MCF 10A (cell line): ENCODE measurements at regions of chr21 and their contacts with region 1.

Region 1: DNA sequence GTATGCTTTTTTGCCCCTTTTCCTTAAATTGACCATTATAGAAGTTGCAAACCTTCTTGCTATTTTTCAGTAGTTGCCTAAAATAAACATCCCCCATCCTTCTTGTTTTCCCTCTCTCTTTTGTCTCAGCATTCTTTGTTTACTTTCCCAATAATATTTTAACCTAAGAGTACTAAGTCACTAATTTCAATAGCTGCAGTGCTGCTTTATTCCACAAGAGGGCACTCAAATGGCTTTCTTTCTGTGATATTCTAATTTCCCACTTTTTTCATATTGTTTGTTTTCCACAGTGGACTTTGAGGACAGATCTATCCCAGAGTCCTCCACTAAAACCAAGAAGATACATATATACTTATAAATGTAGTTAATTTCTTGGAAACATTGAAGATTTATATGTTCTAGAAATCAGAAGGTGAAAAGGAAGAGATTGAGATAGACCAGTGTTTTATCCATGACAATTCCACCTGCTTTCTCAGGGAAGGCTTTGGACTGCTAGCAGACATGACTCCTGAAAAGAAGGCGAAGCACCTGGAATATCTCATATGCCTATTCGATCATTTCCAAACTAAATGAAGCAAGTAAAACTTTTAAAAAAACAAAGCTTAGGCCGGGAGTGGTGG is 104.8 kb upstream of the GRIK1 start:
- DNase-seq: peak; percentile 53
- H3K4me3 Mint-ChIP-seq: no peak overlapping the region
- H3K27ac Mint-ChIP-seq: no peak overlapping the region
- H3K4me1 Mint-ChIP-seq: no peaks in the 10 kb centered on the region
- H3K27me3 Mint-ChIP-seq: peaks cover 6% of the 10 kb centered on the region
- CTCF ChIP-seq: peak; percentile 63

Region 2: DNA sequence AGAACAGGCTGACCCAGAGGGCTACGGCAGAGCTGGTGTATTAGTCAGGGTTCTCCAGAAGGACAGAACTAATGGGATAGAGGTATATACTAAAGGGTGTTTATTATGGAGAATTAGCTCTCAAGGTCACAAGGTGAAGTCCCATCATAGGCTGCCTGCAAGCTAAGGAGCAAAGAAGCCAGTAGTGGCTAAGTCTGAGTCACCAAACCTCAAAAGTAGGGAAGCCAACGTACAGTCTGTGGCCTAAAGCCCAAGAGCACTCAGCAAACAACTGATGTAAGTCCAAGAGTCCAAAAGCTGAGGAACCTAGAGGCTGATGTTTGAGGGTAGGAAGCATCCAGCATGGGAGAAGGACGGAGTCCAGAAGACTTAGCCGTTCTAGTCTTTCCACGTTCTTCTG is 566.6 kb before region 1 on chr21:
- CTCF ChIA-PET with region 1: interaction called, 8 read pairs
- POLR2A ChIA-PET with region 1: no interaction called
- intact Hi-C with region 1: loop called (anchors 10 kb)
- DNase-seq: peak; percentile 4
- H3K4me3 Mint-ChIP-seq: no peak overlapping the region
- H3K27ac Mint-ChIP-seq: no peak overlapping the region
- H3K4me1 Mint-ChIP-seq: no peaks in the 10 kb centered on the region
- H3K27me3 Mint-ChIP-seq: no peaks in the 10 kb centered on the region
- CTCF ChIP-seq: no peak

Region 3: GRCh38 chr21:30058928-30059327 is 14.4 kb after region 1 on chr21:
- CTCF ChIA-PET with region 1: interaction called, 12 read pairs
- POLR2A ChIA-PET with region 1: interaction called, 3 read pairs
- intact Hi-C with region 1: no loop called
- DNase-seq: no peak
- H3K4me3 Mint-ChIP-seq: no peak overlapping the region
- H3K27ac Mint-ChIP-seq: no peak overlapping the region
- H3K4me1 Mint-ChIP-seq: peaks cover 5% of the 10 kb centered on the region
- H3K27me3 Mint-ChIP-seq: no peaks in the 10 kb centered on the region
- CTCF ChIP-seq: no peak

Region 4: GRCh38 chr21:30072496-30072895 is 27.9 kb after region 1 on chr21:
- CTCF ChIA-PET with region 1: interaction called, 28 read pairs
- POLR2A ChIA-PET with region 1: interaction called, 5 read pairs
- intact Hi-C with region 1: loop called (anchors 1 kb)
- DNase-seq: peak; percentile 73
- H3K4me3 Mint-ChIP-seq: no peak overlapping the region
- H3K27ac Mint-ChIP-seq: no peak overlapping the region
- H3K4me1 Mint-ChIP-seq: peaks cover 11% of the 10 kb centered on the region
- H3K27me3 Mint-ChIP-seq: no peaks in the 10 kb centered on the region
- CTCF ChIP-seq: peak; percentile 58

Region 5: DNA sequence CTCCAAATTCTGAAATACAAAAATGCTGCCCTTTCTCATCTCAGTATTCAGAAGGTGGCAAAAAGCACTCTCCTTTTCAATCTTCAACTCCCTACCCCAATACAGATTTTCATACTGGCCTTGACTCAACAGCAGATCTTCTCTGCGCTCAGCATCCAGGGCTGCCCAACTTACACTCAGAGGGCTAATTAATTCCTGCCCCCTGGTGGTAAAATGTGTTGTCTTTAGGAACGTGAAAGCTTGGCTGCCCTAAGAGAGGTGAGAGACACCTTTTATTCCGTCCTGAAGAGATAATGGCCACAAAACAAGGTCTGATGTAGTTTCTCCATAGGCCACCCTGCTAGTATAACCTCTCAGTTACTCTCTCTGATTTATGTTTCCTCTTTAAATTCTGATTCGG is 213.2 kb after region 1 on chr21:
- CTCF ChIA-PET with region 1: interaction called, 12 read pairs
- POLR2A ChIA-PET with region 1: no interaction called
- intact Hi-C with region 1: loop called (anchors 1 kb)
- DNase-seq: peak; percentile 77
- H3K4me3 Mint-ChIP-seq: no peak overlapping the region
- H3K27ac Mint-ChIP-seq: no peak overlapping the region
- H3K4me1 Mint-ChIP-seq: peaks cover 8% of the 10 kb centered on the region
- H3K27me3 Mint-ChIP-seq: no peaks in the 10 kb centered on the region
- CTCF ChIP-seq: peak; percentile 55

Region 6: GRCh38 chr21:30408782-30409494 is 364.4 kb after region 1 on chr21:
- CTCF ChIA-PET with region 1: no interaction called
- POLR2A ChIA-PET with region 1: no interaction called
- intact Hi-C with region 1: loop called (anchors 10 kb)
- DNase-seq: peak; percentile 91
- H3K4me3 Mint-ChIP-seq: peak overlapping the region; percentile 16
- H3K27ac Mint-ChIP-seq: no peak overlapping the region
- H3K4me1 Mint-ChIP-seq: peaks cover 7% of the 10 kb centered on the region
- H3K27me3 Mint-ChIP-seq: peaks cover 94% of the 10 kb centered on the region
- CTCF ChIP-seq: peak; percentile 30